Body of pancreas (tissue), 4 donors: ENCODE measurements at regions of chr3 and their contacts with region 1.

Region 1: DNA sequence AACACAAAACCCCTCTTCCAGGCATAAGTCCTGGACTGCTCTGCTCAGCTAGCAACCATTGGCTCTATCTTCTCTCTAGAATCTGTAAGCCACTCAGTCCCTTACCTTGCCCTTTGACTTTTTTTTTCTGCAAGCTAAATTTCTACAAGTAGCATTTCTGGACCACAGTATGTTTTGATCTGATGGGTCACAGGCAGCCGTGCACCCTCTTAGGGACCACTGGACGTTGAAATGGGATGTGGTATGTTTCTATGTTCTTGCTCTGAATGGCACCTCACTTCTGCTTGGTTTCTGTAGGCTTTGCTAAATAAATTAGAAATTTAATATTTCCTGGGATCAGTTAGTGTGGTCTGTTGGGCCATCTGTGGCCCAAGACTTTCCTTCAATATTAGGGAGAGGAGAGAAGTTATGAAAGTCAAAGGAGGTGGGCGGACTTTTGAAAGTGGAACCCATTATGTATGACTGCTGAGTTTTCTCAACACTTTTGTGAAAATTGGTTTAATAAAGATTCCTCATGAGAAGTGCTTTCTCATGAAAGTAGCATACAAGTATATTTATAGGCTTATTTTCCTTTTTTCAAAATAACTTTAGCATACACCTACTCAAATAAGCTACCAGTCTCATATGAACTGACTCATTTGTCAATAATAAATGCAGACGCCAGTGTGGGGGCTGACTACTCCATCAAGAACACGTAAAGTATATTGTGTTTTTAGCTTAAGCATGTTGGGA is 18.4 kb upstream of the TIPARP start:
- DNase-seq: no peak
- ATAC-seq: no peak
- H3K4me3 ChIP-seq: no peak overlapping the region
- H3K27ac ChIP-seq: no peak overlapping the region
- H3K4me1 ChIP-seq: no peaks in the 10 kb centered on the region
- H3K27me3 ChIP-seq: no peaks in the 10 kb centered on the region
- CTCF ChIP-seq: no peak
- POLR2A ChIP-seq: no peak

Region 2: GRCh38 chr3:156563900-156564682 is 91.9 kb before region 1 on chr3:
- intact Hi-C with region 1: loop called (anchors 10 kb)
- DNase-seq: no peak
- ATAC-seq: no peak
- H3K4me3 ChIP-seq: no peak overlapping the region
- H3K27ac ChIP-seq: no peak overlapping the region
- H3K4me1 ChIP-seq: peaks cover 14% of the 10 kb centered on the region
- H3K27me3 ChIP-seq: no peaks in the 10 kb centered on the region
- CTCF ChIP-seq: no peak
- POLR2A ChIP-seq: no peak